Activated CD4-positive, alpha-beta memory T cell treated with anti-CD3 and anti-CD28 coated beads for 36 hours (primary cell): ENCODE measurements at regions of chr9 and their contacts with region 1.

Region 1: DNA sequence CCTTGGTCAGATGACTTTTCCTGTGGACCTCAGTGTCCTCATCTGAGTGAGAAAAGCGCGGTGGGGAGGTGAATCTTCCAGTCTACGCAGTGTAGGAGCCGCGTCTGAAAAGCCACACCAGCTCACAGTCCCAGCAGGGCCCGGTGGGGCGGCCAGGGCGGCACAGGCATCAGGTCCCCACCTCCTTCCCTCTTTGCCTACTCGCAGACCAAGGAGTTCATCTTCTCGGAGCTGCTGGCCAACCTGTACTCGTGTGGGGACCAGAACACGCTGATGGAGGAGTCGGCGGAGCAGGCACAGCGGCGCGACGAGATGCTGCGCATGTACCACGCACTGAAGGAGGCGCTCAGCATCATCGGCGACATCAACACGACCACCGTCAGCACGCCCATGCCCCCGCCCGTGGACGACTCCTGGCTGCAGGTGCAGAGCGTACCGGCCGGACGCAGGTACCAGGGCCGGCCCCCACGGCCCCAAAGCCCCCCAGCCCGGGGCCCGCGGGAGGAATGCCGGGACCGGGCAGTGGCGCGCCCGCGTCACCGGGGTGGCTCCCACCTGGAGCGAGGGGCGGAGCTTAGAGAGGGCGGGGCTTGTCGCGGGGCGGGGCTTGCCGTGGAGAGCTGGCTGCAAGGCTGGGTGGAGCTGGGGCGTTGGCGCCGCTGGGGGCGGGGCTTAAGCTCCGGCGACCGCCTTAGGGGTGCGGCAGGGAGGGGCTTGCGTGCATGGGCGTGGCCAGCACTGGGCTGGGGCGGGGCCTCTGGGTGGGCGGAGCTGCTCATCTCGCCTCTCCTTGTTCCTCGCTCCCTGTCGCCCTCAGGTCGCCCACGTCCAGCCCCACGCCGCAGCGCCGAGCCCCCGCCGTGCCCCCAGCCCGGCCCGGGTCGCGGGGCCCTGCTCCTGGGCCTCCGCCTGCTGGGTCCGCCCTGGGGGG is 25.6 kb downstream of the GOLGA2 start:
- DNase-seq: peak; percentile 98
- H3K4me3 Mint-ChIP-seq: peak overlapping the region; percentile 78
- H3K27ac Mint-ChIP-seq: no peak overlapping the region
- H3K4me1 Mint-ChIP-seq: peaks cover 12% of the 10 kb centered on the region
- H3K27me3 Mint-ChIP-seq: peaks cover 8% of the 10 kb centered on the region

Region 2: DNA sequence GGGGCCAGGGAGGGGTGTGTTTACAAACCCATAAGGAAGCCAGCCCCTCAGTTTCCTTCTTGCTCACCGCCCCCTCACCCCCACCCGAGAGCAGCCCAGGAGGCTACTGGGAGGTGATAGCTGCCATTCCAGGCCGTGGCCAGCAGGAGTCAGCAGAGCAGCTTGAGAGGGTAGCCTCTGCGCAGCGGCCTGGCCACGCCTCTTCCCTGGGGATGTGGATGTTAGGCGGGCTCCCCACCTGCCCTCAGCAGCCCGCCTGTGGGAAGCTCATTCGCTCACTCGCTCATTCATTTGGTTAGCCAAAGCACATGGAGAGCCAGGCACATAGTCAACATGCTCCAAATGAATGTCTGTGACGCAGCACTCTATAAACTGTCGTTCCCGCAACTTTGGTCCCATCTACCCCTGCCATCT is 306.4 kb before region 1 on chr9:
- CTCF ChIA-PET with region 1: no interaction called
- POLR2A ChIA-PET with region 1: no interaction called
- intact Hi-C with region 1: no loop called
- DNase-seq: peak; percentile 87
- H3K4me3 Mint-ChIP-seq: no peak overlapping the region
- H3K27ac Mint-ChIP-seq: peak overlapping the region; percentile 61
- H3K4me1 Mint-ChIP-seq: peaks cover 18% of the 10 kb centered on the region
- H3K27me3 Mint-ChIP-seq: no peaks in the 10 kb centered on the region

Region 3: GRCh38 chr9:128191406-128192046 is 58.6 kb before region 1 on chr9 and contains the start of gene CIZ1:
- CTCF ChIA-PET with region 1: interaction called, 6 read pairs
- POLR2A ChIA-PET with region 1: no interaction called
- intact Hi-C with region 1: loop called (anchors 10 kb)
- DNase-seq: peak; percentile 76
- H3K4me3 Mint-ChIP-seq: peak within 1 kb of the TSS; percentile 99
- H3K27ac Mint-ChIP-seq: peak within 1 kb of the TSS; percentile 86
- H3K4me1 Mint-ChIP-seq: peaks cover 33% of the 10 kb centered on the region
- H3K27me3 Mint-ChIP-seq: no peaks in the 10 kb centered on the region
- total RNA-seq, gene CIZ1: 95.4 to 105 TPM

Region 4: DNA sequence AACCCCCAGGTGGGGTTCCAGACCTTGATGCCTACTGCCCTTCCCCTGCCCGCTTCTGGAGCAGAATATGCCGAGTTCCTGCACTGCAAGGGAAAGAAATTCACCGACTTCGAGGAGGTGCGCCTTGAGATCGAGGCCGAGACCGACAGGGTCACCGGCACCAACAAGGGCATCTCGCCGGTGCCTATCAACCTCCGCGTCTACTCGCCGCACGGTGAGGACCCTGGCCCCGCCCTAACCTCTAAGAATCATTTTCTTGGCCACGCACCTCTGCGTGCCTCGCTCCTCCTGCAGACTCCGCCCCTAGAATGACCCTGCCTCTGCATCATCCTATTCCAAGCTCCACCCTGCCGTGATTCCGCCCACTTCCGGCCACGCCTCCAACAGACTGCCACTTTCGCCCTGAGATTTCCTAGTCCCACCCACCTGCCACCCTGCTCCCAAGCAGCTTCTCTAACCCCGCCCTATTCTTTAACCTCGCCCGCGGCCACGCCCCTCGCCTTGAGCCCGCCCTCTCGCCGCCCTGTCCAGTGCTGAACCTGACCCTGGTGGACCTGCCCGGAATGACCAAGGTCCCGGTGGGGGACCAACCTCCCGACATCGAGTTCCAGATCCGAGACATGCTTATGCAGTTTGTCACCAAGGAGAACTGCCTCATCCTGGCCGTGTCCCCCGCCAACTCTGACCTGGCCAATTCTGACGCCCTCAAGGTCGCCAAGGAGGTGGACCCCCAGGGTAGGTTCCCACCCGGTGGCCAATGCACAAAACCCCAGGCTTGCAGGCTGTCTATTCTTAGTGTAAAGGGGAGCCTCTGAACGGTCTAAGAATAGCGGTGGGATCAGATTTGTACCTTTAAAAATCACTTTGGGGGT is 31.4 kb before region 1 on chr9:
- CTCF ChIA-PET with region 1: interaction called, 3 read pairs
- POLR2A ChIA-PET with region 1: interaction called, 3 read pairs
- intact Hi-C with region 1: loop called (anchors 1 kb)
- DNase-seq: peak; percentile 99
- H3K4me3 Mint-ChIP-seq: peak overlapping the region; percentile 70
- H3K27ac Mint-ChIP-seq: no peak overlapping the region
- H3K4me1 Mint-ChIP-seq: peaks cover 11% of the 10 kb centered on the region
- H3K27me3 Mint-ChIP-seq: peaks cover 3% of the 10 kb centered on the region

Region 5: GRCh38 chr9:128322404-128323211 is 72.4 kb after region 1 on chr9 and contains the starts of genes COQ4 and TRUB2:
- CTCF ChIA-PET with region 1: interaction called, 3 read pairs
- POLR2A ChIA-PET with region 1: no interaction called
- intact Hi-C with region 1: loop called (anchors 2 kb)
- DNase-seq: peak; percentile 95
- H3K4me3 Mint-ChIP-seq: peak within 1 kb of the TSS; percentile 85
- H3K27ac Mint-ChIP-seq: peak within 1 kb of the TSS; percentile 94
- H3K4me1 Mint-ChIP-seq: peaks cover 17% of the 10 kb centered on the region
- H3K27me3 Mint-ChIP-seq: no peaks in the 10 kb centered on the region
- total RNA-seq, gene COQ4: 33.0 to 35.5 TPM
- total RNA-seq, gene TRUB2: 27.2 to 27.4 TPM

Region 6: GRCh38 chr9:128339771-128340690 is 89.9 kb after region 1 on chr9 and contains the start of gene SLC27A4:
- CTCF ChIA-PET with region 1: interaction called, 6 read pairs
- POLR2A ChIA-PET with region 1: no interaction called
- intact Hi-C with region 1: loop called (anchors 2 kb)
- DNase-seq: peak; percentile 84
- H3K4me3 Mint-ChIP-seq: peak within 1 kb of the TSS; percentile 90
- H3K27ac Mint-ChIP-seq: peak within 1 kb of the TSS; percentile 76
- H3K4me1 Mint-ChIP-seq: peaks cover 5% of the 10 kb centered on the region
- H3K27me3 Mint-ChIP-seq: no peaks in the 10 kb centered on the region
- total RNA-seq, gene SLC27A4: 12.6 to 14.1 TPM

Region 7: DNA sequence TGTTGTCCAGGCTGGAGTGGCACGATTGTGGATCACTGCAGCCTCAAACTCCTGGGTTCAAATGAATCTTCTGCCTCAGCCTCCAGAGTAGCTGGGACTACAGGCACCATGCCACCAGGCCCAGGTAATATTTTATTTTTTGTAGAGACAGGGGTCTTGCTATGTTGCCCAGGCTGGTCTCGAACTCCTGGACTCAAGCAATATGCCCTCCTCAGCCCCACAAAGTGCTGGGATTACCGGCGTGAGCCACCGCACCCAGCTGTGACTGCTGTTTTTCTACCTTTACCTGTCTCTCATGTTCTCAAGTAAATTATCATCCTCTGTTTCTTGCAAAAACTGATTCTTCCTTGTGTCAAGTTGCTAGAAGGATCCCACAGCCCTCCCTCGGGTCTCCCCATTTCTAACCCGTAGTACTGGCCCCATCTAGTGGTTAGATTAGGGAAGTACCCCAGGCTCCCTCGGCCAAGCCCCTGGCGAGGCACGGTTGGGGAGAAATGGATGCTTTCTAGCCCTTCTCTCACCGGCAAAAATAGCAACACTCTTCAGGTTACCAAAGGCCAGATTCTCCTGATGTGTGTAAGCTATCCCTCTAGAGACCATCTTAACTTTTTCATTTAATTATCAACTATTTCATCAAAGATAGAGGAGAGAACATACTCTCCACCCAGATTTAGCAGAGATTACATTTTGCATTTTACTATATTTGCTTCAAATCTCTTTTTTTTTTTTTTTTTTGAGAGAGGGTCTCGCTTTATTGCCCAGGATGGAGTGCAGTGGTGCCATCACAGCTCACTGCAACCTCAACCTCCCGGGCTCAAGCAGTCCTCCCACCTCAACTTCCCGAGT is 1533.6 kb after region 1 on chr9:
- CTCF ChIA-PET with region 1: no interaction called
- POLR2A ChIA-PET with region 1: no interaction called
- intact Hi-C with region 1: no loop called
- DNase-seq: peak; percentile 80
- H3K4me3 Mint-ChIP-seq: no peak overlapping the region
- H3K27ac Mint-ChIP-seq: no peak overlapping the region
- H3K4me1 Mint-ChIP-seq: no peaks in the 10 kb centered on the region
- H3K27me3 Mint-ChIP-seq: no peaks in the 10 kb centered on the region